A673 (cell line): ENCODE measurements at regions of chr7 and their contacts with region 1.

Region 1: DNA sequence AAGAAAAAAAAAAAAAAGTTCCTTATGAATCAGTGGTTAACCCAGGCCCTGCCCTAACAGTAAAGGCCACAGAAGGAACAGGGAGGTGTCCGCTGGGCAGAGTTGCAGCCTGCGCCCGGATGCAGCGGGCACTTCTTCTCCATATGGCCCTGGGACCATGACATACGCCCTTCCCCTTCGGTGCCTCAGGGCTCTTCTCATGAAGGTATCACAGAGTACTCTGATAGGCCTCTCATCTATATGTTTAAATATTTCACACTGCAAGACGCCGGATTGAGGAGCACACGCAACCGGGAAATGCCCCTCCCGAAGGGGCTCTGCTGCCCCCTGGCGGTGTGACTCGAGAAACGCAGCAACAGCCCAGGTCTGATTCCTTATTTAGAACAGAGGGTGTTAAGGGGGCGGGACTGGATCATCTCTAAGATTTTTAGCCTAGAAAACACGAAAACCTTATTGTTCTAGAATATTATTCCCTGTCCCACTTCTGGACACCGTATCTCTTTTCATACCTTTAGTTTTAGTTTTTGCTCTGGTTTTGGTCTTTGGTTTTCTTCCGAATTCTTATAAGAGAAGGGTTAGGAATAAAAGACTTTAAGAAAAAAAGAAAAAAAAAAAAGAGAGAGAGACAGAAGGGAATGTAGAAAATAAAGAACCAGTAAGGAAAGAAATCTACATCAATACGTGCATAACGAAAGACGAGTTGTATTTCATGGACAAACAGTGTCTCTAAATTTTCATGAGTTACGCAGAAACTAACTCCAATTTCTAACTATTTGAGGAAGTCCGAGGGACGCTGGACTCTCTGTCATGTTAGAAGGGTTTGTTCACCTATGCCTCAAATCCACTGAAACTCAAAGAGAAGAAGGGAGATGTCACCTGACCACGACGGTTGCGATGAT is 12.0 kb downstream of the DAGLB start:
- DNase-seq: peak; percentile 91
- H3K4me3 ChIP-seq: no peak overlapping the region
- H3K27ac ChIP-seq: no peak overlapping the region
- H3K4me1 ChIP-seq: peaks cover 3% of the 10 kb centered on the region
- H3K27me3 ChIP-seq: no peaks in the 10 kb centered on the region
- CTCF ChIP-seq: peak; percentile 99

Region 2: GRCh38 chr7:5713124-5713912 is 722.4 kb before region 1 on chr7:
- CTCF ChIA-PET with region 1: no interaction called
- POLR2A ChIA-PET with region 1: no interaction called
- intact Hi-C with region 1: no loop called
- DNase-seq: no peak
- H3K4me3 ChIP-seq: no peak overlapping the region
- H3K27ac ChIP-seq: no peak overlapping the region
- H3K4me1 ChIP-seq: peaks cover 6% of the 10 kb centered on the region
- H3K27me3 ChIP-seq: no peaks in the 10 kb centered on the region
- CTCF ChIP-seq: no peak

Region 3: GRCh38 chr7:5997222-5997808 is 438.4 kb before region 1 on chr7:
- CTCF ChIA-PET with region 1: no interaction called
- POLR2A ChIA-PET with region 1: no interaction called
- intact Hi-C with region 1: loop called (anchors 5 kb)
- DNase-seq: peak; percentile 82
- H3K4me3 ChIP-seq: no peak overlapping the region
- H3K27ac ChIP-seq: no peak overlapping the region
- H3K4me1 ChIP-seq: peaks cover 18% of the 10 kb centered on the region
- H3K27me3 ChIP-seq: no peaks in the 10 kb centered on the region
- CTCF ChIP-seq: peak; percentile 80

Region 4: DNA sequence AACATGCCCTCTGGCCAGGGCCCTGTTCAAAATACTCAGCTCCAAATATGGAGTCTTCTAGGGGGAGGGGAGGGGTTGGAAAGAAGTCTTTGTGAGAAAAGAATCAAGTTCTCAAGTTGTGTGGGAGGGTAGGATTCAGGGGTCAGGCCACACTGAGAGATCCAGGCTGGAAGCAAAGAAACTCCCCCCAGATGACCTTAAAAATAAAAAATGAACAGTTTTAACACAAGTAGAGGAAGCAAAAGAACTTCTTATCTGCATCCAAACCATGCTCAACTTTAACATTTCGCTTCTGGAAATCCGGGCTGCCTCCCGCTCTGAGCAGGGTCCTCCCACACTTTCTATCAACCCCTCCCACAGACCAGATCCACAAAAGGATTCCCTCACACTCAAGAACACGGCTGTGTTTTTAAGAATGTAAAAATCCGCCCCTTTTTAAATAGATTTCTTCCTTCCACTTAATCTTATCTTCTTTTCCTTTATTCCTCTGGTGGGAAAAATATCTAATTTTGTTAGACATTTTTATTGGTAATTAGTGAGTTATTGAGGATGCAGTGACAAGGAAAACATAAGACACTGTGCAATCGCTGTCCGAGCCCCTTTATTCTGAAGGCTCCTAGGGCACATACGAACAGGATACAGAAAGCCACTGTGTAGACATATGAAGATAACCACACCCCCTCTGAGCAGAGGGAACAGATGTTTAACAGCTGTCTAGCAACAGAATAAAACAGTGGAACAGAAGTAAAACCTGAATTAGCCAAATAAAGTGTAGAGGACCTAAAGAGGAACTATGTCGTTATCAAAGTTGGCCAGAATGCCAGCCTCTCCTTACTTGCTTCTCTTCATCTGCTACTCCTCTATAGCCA is 207.1 kb before region 1 on chr7:
- CTCF ChIA-PET with region 1: no interaction called
- POLR2A ChIA-PET with region 1: no interaction called
- intact Hi-C with region 1: no loop called
- DNase-seq: peak; percentile 66
- H3K4me3 ChIP-seq: peak overlapping the region; percentile 15
- H3K27ac ChIP-seq: peak overlapping the region; percentile 73
- H3K4me1 ChIP-seq: peaks cover 58% of the 10 kb centered on the region
- H3K27me3 ChIP-seq: no peaks in the 10 kb centered on the region
- CTCF ChIP-seq: no peak

Region 5: DNA sequence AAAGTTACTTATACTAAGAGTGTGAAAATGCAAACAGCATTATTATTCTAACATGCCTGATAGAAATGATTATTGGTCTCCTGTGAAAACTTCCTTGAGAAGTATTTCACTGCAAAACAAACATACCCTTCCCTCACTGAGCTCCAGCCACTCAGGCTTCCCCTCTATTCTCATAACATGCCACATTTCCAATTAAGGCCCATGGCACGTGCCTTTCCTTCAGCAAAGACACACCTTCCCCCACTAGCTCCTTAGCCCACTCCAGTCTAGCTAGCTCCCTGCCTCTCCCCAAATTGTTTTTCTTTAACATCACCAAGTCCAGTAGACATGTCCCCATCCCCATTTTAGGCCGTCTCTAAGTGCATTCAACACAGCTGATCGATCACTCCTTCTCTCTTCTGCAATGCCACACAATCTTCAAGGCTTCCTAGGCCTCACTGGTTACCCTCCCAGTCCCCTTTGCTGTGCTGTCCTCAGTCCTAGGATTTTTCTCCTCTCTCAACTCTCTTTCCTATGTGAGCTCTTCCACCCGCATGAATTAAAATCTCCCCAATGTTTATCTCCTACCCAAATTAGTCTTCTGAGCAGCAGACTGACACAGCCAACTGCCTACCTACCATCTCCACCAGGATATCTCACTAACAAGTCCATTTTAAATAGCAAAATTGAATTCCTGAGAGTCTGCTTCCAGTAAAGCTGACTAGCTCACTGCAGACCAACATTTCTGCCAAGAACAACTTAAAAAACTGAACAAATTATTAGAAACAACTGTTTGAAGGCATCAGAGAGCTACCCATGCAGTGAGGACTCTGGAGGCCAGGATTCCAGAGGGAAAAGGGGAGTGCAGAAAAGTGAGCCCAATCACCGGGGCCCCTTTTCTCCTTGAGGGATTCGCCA is 175.2 kb before region 1 on chr7:
- CTCF ChIA-PET with region 1: interaction called, 10 read pairs
- POLR2A ChIA-PET with region 1: no interaction called
- intact Hi-C with region 1: no loop called
- DNase-seq: no peak
- H3K4me3 ChIP-seq: no peak overlapping the region
- H3K27ac ChIP-seq: peak overlapping the region; percentile 9
- H3K4me1 ChIP-seq: peaks cover 52% of the 10 kb centered on the region
- H3K27me3 ChIP-seq: no peaks in the 10 kb centered on the region
- CTCF ChIP-seq: no peak